ENCODE measurements at regions of chr2 and their contacts with region 1.

Region 1: DNA sequence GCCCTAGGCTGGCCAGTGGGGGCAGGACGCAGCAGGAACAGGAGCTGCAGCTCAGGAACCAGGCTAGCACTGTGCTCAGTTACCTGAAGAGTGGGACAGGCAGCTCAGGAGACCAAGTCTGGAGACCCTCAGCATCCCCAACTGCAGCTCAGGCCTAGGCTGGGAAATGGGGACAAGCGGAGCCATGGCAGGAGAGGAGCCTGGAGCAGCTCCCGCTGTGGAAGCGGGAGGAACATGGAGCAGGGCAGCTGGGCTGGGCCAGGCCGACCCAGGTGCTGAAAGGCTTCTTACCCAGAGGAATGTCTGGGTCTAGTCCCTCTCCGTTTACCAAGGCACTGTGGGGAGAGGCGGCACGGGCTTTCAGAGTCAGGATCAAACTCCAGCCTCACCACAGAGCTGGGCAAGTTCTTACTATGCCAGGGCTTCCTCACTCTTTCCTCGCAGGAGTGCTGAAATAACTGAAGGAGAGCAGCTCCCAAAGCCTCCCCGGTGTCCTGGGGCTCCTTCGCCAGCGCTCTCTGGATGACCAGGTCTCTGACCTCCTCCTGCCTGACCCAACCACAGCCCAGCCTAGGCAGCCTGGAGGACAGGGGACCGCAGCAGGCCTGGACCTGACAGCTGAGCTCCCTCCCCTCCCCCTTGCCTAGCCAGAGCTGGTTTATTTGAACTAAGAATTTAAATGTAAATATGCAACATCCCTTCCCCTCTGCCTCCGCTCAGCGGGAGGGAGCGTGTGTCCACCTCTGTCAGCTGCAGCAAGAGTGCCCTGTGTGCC is 247.8 kb upstream of the SIX2 start:
- DNase-seq: peak; percentile 75
- ATAC-seq: peak; percentile 88
- H3K4me3 ChIP-seq: peak overlapping the region; percentile 46 to 74 (median 53)
- H3K27ac ChIP-seq: no peak overlapping the region
- H3K4me1 ChIP-seq: peaks cover 66% of the 10 kb centered on the region
- H3K27me3 ChIP-seq: peaks cover 10 to 28% of the 10 kb centered on the region in 2 experiments; a peak in 4 of 5 replicates
- CTCF ChIP-seq: peak; percentile 30; the same call in 1 of the 2 replicates
- EP300 ChIP-seq: peak in 1 of 2 experiments; percentile 40; a peak in 1 of 4 replicates
- POLR2A ChIP-seq: no peak
- RAD21 ChIP-seq: no peak

Region 2: DNA sequence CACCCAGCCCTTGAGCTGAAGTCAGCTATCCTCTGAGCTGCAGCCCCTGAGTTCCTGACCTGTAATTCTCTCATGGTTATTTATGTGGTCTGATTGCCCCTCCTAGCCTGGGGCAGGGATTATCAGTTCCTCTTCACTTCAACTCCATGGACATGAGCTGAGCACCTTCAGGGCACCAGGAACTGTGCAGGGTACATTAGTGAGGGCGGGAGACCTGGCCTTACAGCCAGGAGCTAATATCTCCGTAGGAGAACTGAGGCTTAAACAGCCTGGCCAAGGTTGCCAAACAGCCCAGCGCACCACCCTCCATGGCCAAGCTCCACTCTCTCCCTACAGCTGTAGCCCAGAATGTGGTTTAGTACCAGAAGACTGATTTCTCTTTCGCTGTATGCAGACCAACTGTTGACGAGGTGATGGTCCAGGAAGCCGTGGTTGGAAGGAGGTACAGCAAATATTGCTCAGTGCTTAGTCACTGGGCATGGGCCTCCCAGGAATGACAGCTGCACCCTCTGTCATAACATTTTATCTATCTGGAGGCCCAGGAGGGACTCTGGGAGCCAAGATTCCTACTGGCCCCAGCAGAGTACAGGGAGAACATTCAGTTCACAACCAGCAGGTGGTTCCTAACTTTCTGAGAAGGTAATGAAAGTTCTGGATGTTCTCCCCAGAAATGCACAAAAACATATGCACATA is 19.1 kb before region 1 on chr2:
- CTCF ChIA-PET with region 1: no interaction called
- POLR2A ChIA-PET with region 1: interaction called, 22 read pairs
- in situ Hi-C with region 1: no loop called
- intact Hi-C with region 1: loop called (anchors 1 kb)
- DNase-seq: peak; percentile 83
- ATAC-seq: peak; percentile 96
- H3K4me3 ChIP-seq: no peak overlapping the region
- H3K27ac ChIP-seq: no peak overlapping the region
- H3K4me1 ChIP-seq: peaks cover 18% of the 10 kb centered on the region
- H3K27me3 ChIP-seq: no peaks in the 10 kb centered on the region; a peak in 2 of 5 replicates
- CTCF ChIP-seq: no peak
- EP300 ChIP-seq: peak in 1 of 2 experiments; percentile 57; a peak in 1 of 4 replicates
- POLR2A ChIP-seq: no peak
- RAD21 ChIP-seq: 0 out of 2 replicates have a peak, but pooled peaks have one; percentile 21

Region 3: DNA sequence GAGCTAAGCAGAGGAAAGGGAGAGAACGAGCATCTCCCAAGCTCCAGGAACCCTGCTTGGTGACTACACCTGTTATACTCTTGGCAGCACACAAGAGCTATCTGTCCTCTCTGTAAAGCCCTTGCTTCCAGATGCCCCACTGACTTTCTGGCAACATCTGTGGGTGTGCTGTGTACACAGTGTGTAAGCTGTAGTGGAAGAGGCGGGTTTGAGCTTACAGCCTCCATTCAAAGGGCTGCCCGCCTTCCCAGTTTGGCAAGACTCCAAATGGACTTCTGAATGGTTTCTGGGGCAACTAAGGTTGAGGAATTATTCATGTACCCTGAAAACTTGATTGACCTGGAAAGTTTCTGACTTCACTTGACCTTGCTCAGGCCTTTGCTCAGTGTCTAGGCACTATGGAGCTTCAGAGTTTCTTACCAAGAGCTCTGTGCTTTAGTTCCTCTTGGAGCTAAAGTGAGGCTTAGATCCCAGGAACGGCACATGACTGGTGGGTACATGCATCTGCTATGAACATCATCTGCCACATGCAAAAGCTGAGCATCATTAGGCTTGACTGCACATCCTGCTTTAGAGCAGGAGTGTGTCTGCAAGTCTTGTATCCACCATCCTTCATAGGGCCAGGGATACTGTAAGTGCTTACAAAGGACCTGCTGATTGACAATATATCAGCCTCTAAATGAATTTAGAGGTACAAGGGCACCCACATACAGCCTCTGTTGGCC is 43.1 kb after region 1 on chr2:
- CTCF ChIA-PET with region 1: no interaction called
- POLR2A ChIA-PET with region 1: no interaction called
- in situ Hi-C with region 1: no loop called
- intact Hi-C with region 1: loop called (anchors 1 kb)
- DNase-seq: peak; percentile 84
- ATAC-seq: peak; percentile 92
- H3K4me3 ChIP-seq: no peak overlapping the region
- H3K27ac ChIP-seq: no peak overlapping the region
- H3K4me1 ChIP-seq: peaks cover 17% of the 10 kb centered on the region
- H3K27me3 ChIP-seq: peaks cover 1 to 32% of the 10 kb centered on the region in 2 experiments; a peak in 3 of 5 replicates
- CTCF ChIP-seq: no peak
- EP300 ChIP-seq: peak in 1 of 2 experiments; percentile 22; a peak in 1 of 4 replicates
- POLR2A ChIP-seq: no peak
- RAD21 ChIP-seq: no peak

Region 4: DNA sequence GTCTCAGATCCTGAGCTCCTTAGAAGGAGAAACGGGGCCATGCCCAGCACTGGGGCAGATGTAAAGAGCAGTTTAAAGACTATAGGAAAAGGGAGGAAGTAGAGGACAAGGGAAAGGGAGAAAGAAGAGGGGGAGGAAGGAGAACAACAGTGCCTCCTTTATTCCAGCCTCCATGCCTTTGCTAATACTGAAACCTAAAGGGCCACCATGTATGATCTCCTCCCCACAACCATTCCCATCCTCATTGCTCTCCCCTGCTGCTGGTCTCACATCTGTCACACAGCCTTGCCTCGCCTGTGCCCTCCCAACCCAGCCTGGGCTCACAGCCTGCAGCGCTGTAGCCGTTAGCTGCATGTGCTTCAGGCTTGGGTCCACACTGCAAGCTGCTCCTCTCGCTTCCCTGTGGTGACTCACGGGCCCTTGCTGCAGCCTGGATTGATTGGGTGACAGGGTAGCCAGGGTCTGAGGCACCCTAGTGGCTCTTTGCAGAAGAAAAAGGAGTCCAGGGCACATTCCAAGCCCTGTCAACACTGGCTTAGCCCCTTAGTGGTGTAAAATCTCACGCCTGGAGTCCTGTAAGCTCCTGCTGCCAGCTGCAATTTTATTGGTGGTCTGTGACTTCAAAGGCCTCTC is 72.1 kb after region 1 on chr2:
- CTCF ChIA-PET with region 1: no interaction called
- POLR2A ChIA-PET with region 1: interaction called, 5 read pairs
- in situ Hi-C with region 1: no loop called
- intact Hi-C with region 1: loop called (anchors 5 kb)
- DNase-seq: peak; percentile 67
- ATAC-seq: peak; percentile 92
- H3K4me3 ChIP-seq: no peak overlapping the region
- H3K27ac ChIP-seq: no peak overlapping the region
- H3K4me1 ChIP-seq: peaks cover 49% of the 10 kb centered on the region
- H3K27me3 ChIP-seq: peaks cover 4 to 51% of the 10 kb centered on the region in 2 experiments; a peak in 4 of 5 replicates
- CTCF ChIP-seq: peak; percentile 60
- EP300 ChIP-seq: no peak
- POLR2A ChIP-seq: no peak
- RAD21 ChIP-seq: peak; percentile 60

Region 5: DNA sequence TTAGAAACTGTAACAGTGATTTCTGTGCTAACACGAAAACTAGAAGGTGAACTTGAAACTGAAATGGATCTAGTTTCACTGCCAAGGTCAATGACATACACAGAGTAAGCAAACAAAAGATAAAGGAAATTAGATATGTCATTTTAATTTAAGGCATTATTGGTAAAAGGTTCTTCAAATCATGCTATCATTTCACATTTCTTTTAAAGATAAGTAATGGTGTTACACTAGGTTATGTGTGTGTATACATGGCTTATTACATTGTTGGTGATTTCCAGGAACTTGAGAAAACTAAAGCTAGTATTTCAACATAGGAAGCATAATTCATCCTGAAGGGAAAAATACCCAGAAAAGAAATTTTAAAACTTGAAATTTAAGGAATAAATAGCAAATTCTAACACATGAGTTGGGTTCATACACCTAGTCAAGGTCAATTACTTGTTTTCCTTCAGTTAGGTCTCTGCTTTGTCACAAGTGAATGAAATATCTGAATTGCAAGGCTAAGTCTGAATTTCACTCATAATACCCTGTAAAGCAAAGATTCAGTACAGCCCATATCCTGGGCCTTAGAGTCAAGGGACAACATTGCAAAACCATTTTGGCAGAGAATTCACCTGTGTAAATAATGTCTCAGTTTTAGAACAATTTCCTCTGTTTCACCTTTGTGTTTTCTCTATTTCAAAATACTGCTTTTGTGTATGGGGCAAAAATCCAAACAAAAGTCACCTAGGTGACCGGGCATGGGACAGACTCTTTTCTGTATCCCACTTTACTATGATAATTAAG is 212.5 kb after region 1 on chr2:
- CTCF ChIA-PET with region 1: no interaction called
- POLR2A ChIA-PET with region 1: no interaction called
- in situ Hi-C with region 1: no loop called
- intact Hi-C with region 1: loop called (anchors 5 kb)
- DNase-seq: peak; percentile 97
- ATAC-seq: peak; percentile 99
- H3K4me3 ChIP-seq: no peak overlapping the region
- H3K27ac ChIP-seq: peak overlapping the region; percentile 66
- H3K4me1 ChIP-seq: peaks cover 26% of the 10 kb centered on the region
- H3K27me3 ChIP-seq: no peaks in the 10 kb centered on the region
- CTCF ChIP-seq: no peak
- EP300 ChIP-seq: peak; percentile 92 to 94
- POLR2A ChIP-seq: no peak
- RAD21 ChIP-seq: no peak